Panc1 (cell line): ENCODE measurements at regions of chr2 and their contacts with region 1.

Region 1: DNA sequence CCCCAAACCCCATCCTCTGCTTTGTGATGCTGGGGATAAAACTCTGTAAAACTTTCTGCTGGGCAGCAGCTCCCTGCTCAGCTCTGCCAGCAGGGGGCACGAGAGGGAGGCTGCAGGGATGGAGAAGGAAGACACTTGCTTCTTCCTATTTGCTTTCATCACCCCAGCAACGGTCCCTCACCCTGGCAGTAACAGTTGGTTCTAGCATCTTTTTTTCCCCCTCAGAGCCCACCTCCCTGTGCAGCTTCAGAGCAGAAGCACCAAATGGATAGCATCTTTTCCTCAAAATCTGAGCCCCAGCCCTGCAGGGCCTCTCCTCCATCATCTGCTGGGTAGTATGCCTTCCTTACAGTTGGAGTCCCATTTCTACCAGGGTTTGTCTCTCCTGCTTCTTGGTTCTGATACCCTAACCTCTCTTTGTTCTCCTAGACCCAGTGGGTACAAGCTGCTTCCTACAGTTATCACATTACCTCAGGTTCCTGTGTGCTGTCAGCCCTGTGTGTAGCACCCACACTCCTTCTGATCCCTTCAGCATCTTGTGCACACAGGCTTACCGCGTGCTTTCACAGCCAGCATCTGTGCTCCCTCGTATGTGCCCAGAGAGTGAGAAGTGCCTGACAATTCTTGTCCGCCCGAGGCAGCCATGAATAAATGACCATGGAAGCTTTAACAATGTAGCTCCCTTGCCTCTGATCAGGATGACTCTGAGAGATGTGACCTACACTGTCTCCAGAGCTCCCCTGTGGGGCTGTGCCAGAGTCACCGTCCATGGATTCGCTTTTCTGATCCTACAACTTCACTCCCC is 14.5 kb downstream of the CKAP2L start:
- DNase-seq: peak; percentile 64
- ATAC-seq: peak; percentile 89
- H3K4me3 ChIP-seq: no peak overlapping the region
- H3K27ac ChIP-seq: no peak overlapping the region
- H3K4me1 ChIP-seq: no peaks in the 10 kb centered on the region; the same call in 1 of the 2 replicates
- H3K27me3 ChIP-seq: no peaks in the 10 kb centered on the region
- CTCF ChIP-seq: peak; percentile 97

Region 2: DNA sequence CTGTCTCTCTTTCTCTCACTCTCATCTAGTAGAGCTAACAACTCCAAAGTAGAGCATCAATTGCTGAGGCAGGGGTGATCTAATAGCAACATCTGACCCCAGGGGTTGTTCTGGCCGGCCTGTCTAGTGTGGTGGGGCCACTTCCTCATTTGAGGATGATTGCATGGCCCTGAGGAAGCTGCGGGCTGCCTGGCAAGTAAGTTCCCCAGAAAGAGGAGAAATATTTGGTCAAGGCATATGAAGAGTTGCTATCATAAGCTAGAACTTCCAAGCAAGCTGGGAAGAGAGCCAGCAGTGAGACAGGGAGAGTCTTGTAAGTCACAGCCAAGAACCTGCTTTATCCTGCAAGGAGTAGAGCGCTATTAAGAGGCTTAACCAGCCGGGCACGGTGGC is 745.7 kb before region 1 on chr2:
- CTCF ChIA-PET with region 1: no interaction called
- POLR2A ChIA-PET with region 1: no interaction called
- in situ Hi-C with region 1: no loop called
- intact Hi-C with region 1: no loop called
- DNase-seq: no peak
- ATAC-seq: no peak
- H3K4me3 ChIP-seq: no peak overlapping the region
- H3K27ac ChIP-seq: no peak overlapping the region
- H3K4me1 ChIP-seq: no peaks in the 10 kb centered on the region
- H3K27me3 ChIP-seq: no peaks in the 10 kb centered on the region
- CTCF ChIP-seq: no peak

Region 3: DNA sequence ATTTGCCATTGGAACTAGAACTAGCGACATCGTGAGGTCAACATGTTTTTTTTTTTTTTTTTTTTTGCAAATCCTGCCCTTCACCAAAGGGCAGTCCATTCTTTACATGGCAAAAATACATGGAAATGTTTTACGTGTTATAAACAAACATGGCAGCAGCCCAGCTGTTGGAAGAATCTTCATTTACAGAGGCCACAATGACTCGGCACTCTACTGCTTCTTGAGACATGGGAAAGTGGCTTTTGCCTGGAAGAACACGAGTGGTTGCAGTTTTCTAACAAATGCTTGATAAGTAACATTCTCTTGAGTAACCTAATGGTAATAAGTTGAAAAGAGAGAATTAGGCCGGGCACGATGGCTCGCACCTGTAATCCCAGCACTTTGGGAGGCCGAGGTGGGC is 230.5 kb before region 1 on chr2:
- CTCF ChIA-PET with region 1: no interaction called
- POLR2A ChIA-PET with region 1: no interaction called
- in situ Hi-C with region 1: no loop called
- intact Hi-C with region 1: no loop called
- DNase-seq: no peak
- ATAC-seq: no peak
- H3K4me3 ChIP-seq: no peak overlapping the region
- H3K27ac ChIP-seq: no peak overlapping the region
- H3K4me1 ChIP-seq: no peaks in the 10 kb centered on the region
- H3K27me3 ChIP-seq: no peaks in the 10 kb centered on the region
- CTCF ChIP-seq: no peak

Region 4: GRCh38 chr2:112879491-112880041 is 129.6 kb after region 1 on chr2:
- CTCF ChIA-PET with region 1: no interaction called
- POLR2A ChIA-PET with region 1: no interaction called
- in situ Hi-C with region 1: no loop called
- intact Hi-C with region 1: loop called (anchors 1 kb)
- DNase-seq: no peak
- ATAC-seq: no peak
- H3K4me3 ChIP-seq: no peak overlapping the region
- H3K27ac ChIP-seq: no peak overlapping the region
- H3K4me1 ChIP-seq: no peaks in the 10 kb centered on the region; the same call in 1 of the 2 replicates
- H3K27me3 ChIP-seq: no peaks in the 10 kb centered on the region
- CTCF ChIP-seq: no peak

Region 5: DNA sequence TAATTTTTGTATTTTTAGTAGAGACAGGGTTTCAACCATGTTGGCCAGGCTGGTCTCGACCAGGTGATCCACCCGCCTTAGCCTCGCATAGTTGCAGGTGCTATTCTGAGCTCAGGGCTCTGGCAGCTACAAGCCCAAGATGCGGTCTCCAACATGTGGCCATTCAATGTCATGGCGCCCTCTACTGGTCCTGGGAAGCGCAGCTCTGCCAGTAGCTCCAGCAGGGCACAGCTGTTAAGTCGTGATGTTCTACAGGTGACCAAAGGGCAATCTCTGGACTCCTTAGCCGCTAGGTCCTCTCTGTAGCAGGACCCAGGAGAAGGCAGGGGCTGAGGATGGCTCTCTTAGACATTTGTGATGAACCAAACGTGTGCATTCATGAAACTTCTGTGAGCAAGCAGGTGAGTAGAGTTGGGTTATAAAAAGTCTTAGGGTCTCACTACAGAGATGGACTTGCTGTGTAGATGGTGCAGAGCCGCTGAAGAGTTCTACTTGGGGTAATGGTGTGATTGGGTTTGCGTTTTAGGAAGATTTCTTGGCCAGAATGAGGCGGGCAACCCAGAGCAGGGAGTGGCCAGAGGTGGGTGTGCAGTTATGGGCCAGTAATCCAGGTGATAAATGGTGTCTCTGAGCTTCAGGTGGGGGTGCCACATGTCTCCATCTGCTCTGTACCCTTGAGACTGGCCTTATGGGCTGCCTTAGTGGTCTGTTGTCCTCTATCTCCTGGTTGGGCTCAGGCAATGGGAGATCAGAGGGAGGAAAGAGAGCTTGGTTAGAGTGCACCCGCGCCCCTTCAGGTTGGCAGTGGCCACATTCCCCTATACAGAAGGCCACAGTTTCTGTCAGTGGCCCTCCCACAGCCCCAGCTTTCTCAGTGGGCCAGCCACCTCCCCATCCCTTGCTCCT is 192.0 kb after region 1 on chr2:
- CTCF ChIA-PET with region 1: interaction called, 43 read pairs
- POLR2A ChIA-PET with region 1: interaction called, 4 read pairs
- in situ Hi-C with region 1: no loop called
- intact Hi-C with region 1: loop called (anchors 1 kb)
- DNase-seq: peak; percentile 51
- ATAC-seq: peak; percentile 96
- H3K4me3 ChIP-seq: no peak overlapping the region
- H3K27ac ChIP-seq: no peak overlapping the region
- H3K4me1 ChIP-seq: no peaks in the 10 kb centered on the region
- H3K27me3 ChIP-seq: peaks cover 6% of the 10 kb centered on the region; the same call in 1 of the 2 replicates
- CTCF ChIP-seq: peak; percentile 92

Region 6: GRCh38 chr2:112958428-112959108 is 208.6 kb after region 1 on chr2:
- CTCF ChIA-PET with region 1: no interaction called
- POLR2A ChIA-PET with region 1: no interaction called
- in situ Hi-C with region 1: no loop called
- intact Hi-C with region 1: loop called (anchors 2 kb)
- DNase-seq: peak; percentile 36
- ATAC-seq: peak; percentile 94
- H3K4me3 ChIP-seq: no peak overlapping the region
- H3K27ac ChIP-seq: no peak overlapping the region
- H3K4me1 ChIP-seq: no peaks in the 10 kb centered on the region
- H3K27me3 ChIP-seq: peaks cover 11% of the 10 kb centered on the region
- CTCF ChIP-seq: peak; percentile 92